ENCODE measurements at regions of chr10 and their contacts with region 1.

Region 1: GRCh38 chr10:26556748-26557640 is 118.9 kb downstream of the APBB1IP start:
- DNase-seq: peak; percentile 59
- H3K4me3 Mint-ChIP-seq: peak overlapping the region; percentile 14
- H3K27ac Mint-ChIP-seq: no peak overlapping the region
- H3K4me1 Mint-ChIP-seq: peaks cover 17% of the 10 kb centered on the region
- H3K27me3 Mint-ChIP-seq: peaks cover 49% of the 10 kb centered on the region
- CTCF ChIP-seq: peak; percentile 91

Region 2: GRCh38 chr10:25725918-25726716 is 830.9 kb before region 1 on chr10:
- CTCF ChIA-PET with region 1: interaction called, 4 read pairs
- POLR2A ChIA-PET with region 1: interaction called, 3 read pairs
- intact Hi-C with region 1: loop called (anchors 10 kb)
- DNase-seq: peak; percentile 66
- H3K4me3 Mint-ChIP-seq: no peak overlapping the region
- H3K27ac Mint-ChIP-seq: no peak overlapping the region
- H3K4me1 Mint-ChIP-seq: no peaks in the 10 kb centered on the region
- H3K27me3 Mint-ChIP-seq: peaks cover 55% of the 10 kb centered on the region
- CTCF ChIP-seq: peak; percentile 55

Region 3: GRCh38 chr10:25758041-25758457 is 798.9 kb before region 1 on chr10:
- CTCF ChIA-PET with region 1: interaction called, 3 read pairs
- POLR2A ChIA-PET with region 1: no interaction called
- intact Hi-C with region 1: loop called (anchors 1 kb)
- DNase-seq: peak; percentile 52
- H3K4me3 Mint-ChIP-seq: no peak overlapping the region
- H3K27ac Mint-ChIP-seq: no peak overlapping the region
- H3K4me1 Mint-ChIP-seq: no peaks in the 10 kb centered on the region
- H3K27me3 Mint-ChIP-seq: peaks cover 30% of the 10 kb centered on the region
- CTCF ChIP-seq: peak; percentile 59

Region 4: DNA sequence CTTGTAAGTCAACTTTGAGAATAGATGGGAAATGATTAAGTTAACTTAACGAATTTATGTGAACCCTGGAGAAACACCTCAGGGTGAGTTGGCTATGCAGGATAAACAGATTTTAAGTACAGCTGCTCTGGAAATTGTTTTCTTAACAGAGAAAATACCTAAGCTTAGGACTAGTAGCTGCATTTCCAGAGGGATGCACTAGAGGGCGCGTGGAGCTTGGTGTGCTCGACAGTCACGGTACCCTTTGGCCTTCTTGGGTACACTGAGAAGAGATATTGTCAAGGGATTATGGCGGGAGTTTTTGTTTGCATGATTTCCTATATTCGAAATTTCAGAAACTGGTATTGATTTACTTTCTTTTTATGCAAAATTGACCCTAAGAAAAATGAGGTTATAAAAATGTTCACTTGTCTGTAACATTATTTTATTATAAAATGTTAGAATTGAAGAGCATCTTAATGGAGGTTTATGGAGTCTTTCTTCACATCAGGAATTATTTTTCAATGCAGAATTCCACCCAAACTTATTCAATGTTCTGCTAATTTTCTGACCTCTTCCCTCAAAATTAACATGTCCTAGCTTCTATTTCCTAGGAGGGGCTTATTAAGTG is 681.3 kb before region 1 on chr10:
- CTCF ChIA-PET with region 1: interaction called, 14 read pairs
- POLR2A ChIA-PET with region 1: no interaction called
- intact Hi-C with region 1: loop called (anchors 1 kb)
- DNase-seq: peak; percentile 79
- H3K4me3 Mint-ChIP-seq: no peak overlapping the region
- H3K27ac Mint-ChIP-seq: no peak overlapping the region
- H3K4me1 Mint-ChIP-seq: no peaks in the 10 kb centered on the region
- H3K27me3 Mint-ChIP-seq: peaks cover 18% of the 10 kb centered on the region
- CTCF ChIP-seq: peak; percentile 81

Region 5: DNA sequence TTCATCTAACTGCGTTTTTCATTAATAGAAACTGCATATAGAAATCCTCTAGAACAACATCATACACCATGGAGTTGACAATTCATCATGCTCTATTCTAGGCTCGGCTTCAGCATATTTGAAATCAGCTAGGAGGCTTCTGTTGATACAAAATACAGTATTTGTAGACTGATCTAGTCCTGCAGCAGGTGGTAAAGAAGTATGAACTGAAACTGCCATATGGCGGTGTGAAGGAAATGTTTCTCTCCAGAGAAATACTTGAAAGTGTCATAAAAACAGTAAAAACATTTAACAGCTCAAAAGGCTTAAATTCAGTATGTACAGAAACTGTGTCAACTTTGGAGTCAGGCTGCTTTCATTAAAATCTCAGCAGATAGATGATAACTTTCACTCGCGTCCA is 655.0 kb before region 1 on chr10:
- CTCF ChIA-PET with region 1: no interaction called
- POLR2A ChIA-PET with region 1: no interaction called
- intact Hi-C with region 1: no loop called
- DNase-seq: no peak
- H3K4me3 Mint-ChIP-seq: no peak overlapping the region
- H3K27ac Mint-ChIP-seq: no peak overlapping the region
- H3K4me1 Mint-ChIP-seq: no peaks in the 10 kb centered on the region
- H3K27me3 Mint-ChIP-seq: peaks cover 60% of the 10 kb centered on the region
- CTCF ChIP-seq: no peak

Region 6: DNA sequence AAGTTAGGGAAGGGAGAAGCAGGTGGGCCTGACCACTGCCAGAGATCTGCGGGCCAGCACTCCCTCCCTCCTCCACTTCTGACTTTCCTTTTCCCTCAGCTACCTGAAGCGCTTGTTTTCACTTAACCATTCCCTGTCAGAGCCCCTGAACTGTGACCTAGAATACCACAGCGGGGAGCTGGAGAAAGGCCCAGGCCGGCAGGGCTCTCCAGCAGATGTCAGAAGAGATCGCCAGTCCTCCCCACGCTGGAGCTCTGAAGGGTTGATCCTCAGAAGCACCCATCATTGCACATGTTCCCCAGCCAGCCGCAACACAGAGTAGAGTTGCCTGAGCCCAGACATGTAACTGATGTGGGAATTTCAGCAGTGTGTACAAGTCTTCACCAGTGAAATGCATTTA is 384.9 kb before region 1 on chr10:
- CTCF ChIA-PET with region 1: no interaction called
- POLR2A ChIA-PET with region 1: no interaction called
- intact Hi-C with region 1: no loop called
- DNase-seq: no peak
- H3K4me3 Mint-ChIP-seq: no peak overlapping the region
- H3K27ac Mint-ChIP-seq: no peak overlapping the region
- H3K4me1 Mint-ChIP-seq: no peaks in the 10 kb centered on the region
- H3K27me3 Mint-ChIP-seq: peaks cover 77% of the 10 kb centered on the region
- CTCF ChIP-seq: no peak

Region 7: DNA sequence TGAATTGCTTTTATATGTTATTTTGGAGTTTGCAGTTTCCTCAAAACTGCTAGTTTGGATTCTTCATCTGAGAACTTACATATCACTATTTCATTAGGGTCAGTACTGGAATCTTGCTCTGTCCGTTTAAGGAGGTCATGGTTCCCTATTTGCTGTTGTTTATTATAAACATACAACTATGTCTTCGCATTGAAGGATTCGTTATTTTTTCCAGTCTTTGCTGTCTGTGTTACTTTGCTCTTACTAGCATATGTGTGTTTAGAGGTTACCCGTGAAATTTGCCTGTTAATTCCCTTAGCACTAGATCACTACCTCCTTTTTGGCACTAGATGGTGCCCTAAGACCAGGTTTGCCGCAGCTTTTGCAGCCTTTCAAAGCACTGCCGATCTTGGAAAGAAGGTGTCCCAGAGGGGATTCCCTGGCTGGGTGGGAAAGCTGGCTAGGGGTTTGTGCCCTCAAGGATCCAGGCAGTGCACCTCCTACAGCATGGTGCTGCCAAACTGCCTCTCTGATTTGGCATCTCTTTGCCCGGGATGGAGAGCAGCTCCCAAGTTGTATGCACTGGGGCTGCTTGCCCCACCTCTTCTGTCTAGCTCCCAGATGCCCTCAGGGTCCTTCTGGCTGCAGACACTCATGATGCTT is 221.9 kb before region 1 on chr10:
- CTCF ChIA-PET with region 1: interaction called, 127 read pairs
- POLR2A ChIA-PET with region 1: interaction called, 8 read pairs
- intact Hi-C with region 1: loop called (anchors 1 kb)
- DNase-seq: peak; percentile 66
- H3K4me3 Mint-ChIP-seq: no peak overlapping the region
- H3K27ac Mint-ChIP-seq: no peak overlapping the region
- H3K4me1 Mint-ChIP-seq: no peaks in the 10 kb centered on the region
- H3K27me3 Mint-ChIP-seq: peaks cover 36% of the 10 kb centered on the region
- CTCF ChIP-seq: peak; percentile 87

Region 8: DNA sequence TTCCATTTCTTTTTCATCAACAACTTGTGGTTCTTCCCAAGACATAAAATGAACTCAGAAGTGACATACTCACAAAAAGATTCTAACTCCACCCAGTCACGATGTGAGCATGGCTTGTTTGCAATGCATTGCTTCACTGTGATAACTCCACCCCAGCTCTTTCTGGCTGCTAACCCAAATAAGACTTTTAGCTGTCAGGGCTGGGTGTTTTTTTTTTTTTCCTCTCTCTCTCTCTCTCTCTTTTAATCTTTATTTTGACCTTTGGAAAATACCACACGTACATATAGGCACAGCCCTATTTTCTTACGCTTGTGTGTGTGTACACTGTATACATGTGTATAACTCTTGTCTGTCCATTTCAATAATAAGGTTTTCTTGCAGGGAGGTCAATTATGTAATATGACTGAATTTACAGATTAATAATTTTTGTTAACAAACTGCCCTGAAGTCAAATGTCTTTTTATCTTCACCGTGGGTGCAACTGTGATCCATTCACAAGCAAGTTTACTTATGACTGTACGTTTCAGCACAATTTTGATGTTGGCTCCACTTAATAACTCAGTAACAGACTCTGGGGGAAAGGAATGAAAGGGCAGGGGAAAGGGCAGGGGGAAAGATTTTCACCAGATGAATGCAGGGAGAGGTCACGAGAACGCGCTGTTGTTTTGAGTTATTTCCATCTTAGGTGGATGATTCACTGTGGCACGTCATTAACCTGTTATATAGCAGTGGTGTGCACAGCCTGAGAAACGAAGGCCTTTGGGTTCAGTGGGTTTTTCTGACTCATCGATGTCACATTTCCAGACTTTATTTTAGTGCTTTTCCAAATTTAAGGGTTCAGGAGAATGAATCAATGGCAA is 69.8 kb before region 1 on chr10:
- CTCF ChIA-PET with region 1: interaction called, 5 read pairs
- POLR2A ChIA-PET with region 1: interaction called, 11 read pairs
- intact Hi-C with region 1: loop called (anchors 1 kb)
- DNase-seq: peak; percentile 88
- H3K4me3 Mint-ChIP-seq: peak overlapping the region; percentile 66
- H3K27ac Mint-ChIP-seq: peak overlapping the region; percentile 94
- H3K4me1 Mint-ChIP-seq: peaks cover 28% of the 10 kb centered on the region
- H3K27me3 Mint-ChIP-seq: no peaks in the 10 kb centered on the region
- CTCF ChIP-seq: no peak

Region 9: GRCh38 chr10:26509307-26509706 is 47.7 kb before region 1 on chr10:
- CTCF ChIA-PET with region 1: no interaction called
- POLR2A ChIA-PET with region 1: no interaction called
- intact Hi-C with region 1: no loop called
- DNase-seq: no peak
- H3K4me3 Mint-ChIP-seq: no peak overlapping the region
- H3K27ac Mint-ChIP-seq: no peak overlapping the region
- H3K4me1 Mint-ChIP-seq: no peaks in the 10 kb centered on the region
- H3K27me3 Mint-ChIP-seq: no peaks in the 10 kb centered on the region
- CTCF ChIP-seq: no peak